MCF 10A (cell line): ENCODE measurements at regions of chr11 and their contacts with region 1.

Region 1: GRCh38 chr11:70467201-70468085 is 69.1 kb downstream of the CTTN start:
- DNase-seq: peak; percentile 64
- H3K4me3 Mint-ChIP-seq: no peak overlapping the region
- H3K27ac Mint-ChIP-seq: no peak overlapping the region
- H3K4me1 Mint-ChIP-seq: no peaks in the 10 kb centered on the region
- H3K27me3 Mint-ChIP-seq: no peaks in the 10 kb centered on the region
- CTCF ChIP-seq: peak; percentile 83

Region 2: GRCh38 chr11:70580036-70580845 is 112.8 kb after region 1 on chr11:
- CTCF ChIA-PET with region 1: no interaction called
- POLR2A ChIA-PET with region 1: no interaction called
- intact Hi-C with region 1: no loop called
- DNase-seq: no peak
- H3K4me3 Mint-ChIP-seq: no peak overlapping the region
- H3K27ac Mint-ChIP-seq: no peak overlapping the region
- H3K4me1 Mint-ChIP-seq: no peaks in the 10 kb centered on the region
- H3K27me3 Mint-ChIP-seq: no peaks in the 10 kb centered on the region
- CTCF ChIP-seq: no peak

Region 3: DNA sequence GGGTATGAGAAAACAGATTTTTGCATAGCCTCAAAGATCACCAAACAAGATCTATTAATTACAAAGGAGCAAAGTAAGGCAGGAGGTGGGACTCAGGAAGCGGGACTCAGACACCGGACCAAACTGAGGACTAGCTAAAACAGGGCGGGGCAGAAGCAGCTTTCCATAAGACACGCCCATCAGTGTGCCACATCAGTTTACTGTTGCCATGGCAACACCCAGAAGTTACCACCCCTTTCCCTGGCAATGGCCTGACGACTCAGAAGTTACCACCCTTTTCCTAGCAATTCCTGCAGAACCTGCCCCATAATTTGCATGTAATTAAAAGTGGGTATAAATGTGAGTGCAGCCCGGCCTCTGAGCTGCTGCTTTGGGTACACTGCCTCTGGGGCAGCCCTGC is 611.0 kb after region 1 on chr11:
- CTCF ChIA-PET with region 1: interaction called, 12 read pairs
- POLR2A ChIA-PET with region 1: no interaction called
- intact Hi-C with region 1: no loop called
- DNase-seq: no peak
- H3K4me3 Mint-ChIP-seq: no peak overlapping the region
- H3K27ac Mint-ChIP-seq: no peak overlapping the region
- H3K4me1 Mint-ChIP-seq: no peaks in the 10 kb centered on the region
- H3K27me3 Mint-ChIP-seq: no peaks in the 10 kb centered on the region
- CTCF ChIP-seq: no peak

Region 4: DNA sequence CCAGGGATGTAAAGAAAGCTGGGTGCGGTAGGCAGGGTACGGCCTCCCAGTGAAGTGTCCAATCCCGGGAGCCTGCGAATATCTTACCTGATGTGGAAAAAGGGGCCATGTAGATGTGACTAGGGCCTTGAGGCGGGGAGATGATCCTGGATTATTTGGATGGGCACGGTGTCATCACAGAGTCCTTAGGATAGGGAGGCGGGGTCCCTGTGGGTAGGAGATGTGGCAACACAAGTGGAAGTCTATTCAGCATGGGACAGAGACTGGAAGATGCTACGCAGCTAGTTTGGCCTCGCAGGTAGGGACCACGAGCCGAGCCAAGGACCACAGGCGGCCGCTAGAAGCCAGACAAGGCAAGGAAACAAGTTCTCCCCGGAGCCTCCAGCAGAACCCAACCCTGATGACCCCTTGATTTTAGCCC is 831.3 kb after region 1 on chr11:
- CTCF ChIA-PET with region 1: no interaction called
- POLR2A ChIA-PET with region 1: no interaction called
- intact Hi-C with region 1: loop called (anchors 1 kb)
- DNase-seq: no peak
- H3K4me3 Mint-ChIP-seq: peak overlapping the region; percentile 56
- H3K27ac Mint-ChIP-seq: peak overlapping the region; percentile 97
- H3K4me1 Mint-ChIP-seq: peaks cover 21% of the 10 kb centered on the region
- H3K27me3 Mint-ChIP-seq: no peaks in the 10 kb centered on the region
- CTCF ChIP-seq: no peak

Region 5: GRCh38 chr11:71420455-71421241 is 953.2 kb after region 1 on chr11:
- CTCF ChIA-PET with region 1: interaction called, 3 read pairs
- POLR2A ChIA-PET with region 1: no interaction called
- intact Hi-C with region 1: loop called (anchors 1 kb)
- DNase-seq: peak; percentile 56
- H3K4me3 Mint-ChIP-seq: no peak overlapping the region
- H3K27ac Mint-ChIP-seq: no peak overlapping the region
- H3K4me1 Mint-ChIP-seq: peaks cover 3% of the 10 kb centered on the region
- H3K27me3 Mint-ChIP-seq: no peaks in the 10 kb centered on the region
- CTCF ChIP-seq: peak; percentile 60

Region 6: DNA sequence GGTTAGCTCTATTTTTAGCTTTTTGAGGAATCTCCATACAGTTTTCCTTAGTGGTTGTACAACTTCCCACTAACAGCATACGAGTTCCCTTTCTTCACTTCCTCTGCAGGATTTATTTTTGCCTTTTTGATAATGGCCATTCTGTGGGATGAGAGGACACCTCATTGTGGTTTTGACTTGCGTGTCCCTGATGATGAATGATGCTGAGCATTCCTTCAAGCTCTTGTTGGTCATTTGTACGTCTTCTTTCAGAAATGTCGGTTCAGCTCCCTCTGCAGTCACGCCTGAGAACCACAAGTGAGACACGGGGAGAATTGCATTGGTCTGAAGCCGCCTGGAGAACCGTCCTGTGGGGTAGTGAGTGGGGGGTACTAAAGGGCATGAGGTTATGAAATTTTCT is 1096.0 kb after region 1 on chr11:
- CTCF ChIA-PET with region 1: no interaction called
- POLR2A ChIA-PET with region 1: no interaction called
- intact Hi-C with region 1: loop called (anchors 1 kb)
- DNase-seq: peak; percentile 58
- H3K4me3 Mint-ChIP-seq: no peak overlapping the region
- H3K27ac Mint-ChIP-seq: no peak overlapping the region
- H3K4me1 Mint-ChIP-seq: no peaks in the 10 kb centered on the region
- H3K27me3 Mint-ChIP-seq: peaks cover 48% of the 10 kb centered on the region
- CTCF ChIP-seq: peak; percentile 20